ENCODE measurements at regions of chr5 and their contacts with region 1.

Region 1: GRCh38 chr5:170100066-170100943 is 5.4 kb upstream of the FOXI1 start:
- DNase-seq: peak; percentile 74 to 87 (median 81)
- ATAC-seq: peak; percentile 35 to 52
- H3K4me3 ChIP-seq: no peak overlapping the region
- H3K27ac ChIP-seq: no peak overlapping the region
- H3K4me1 ChIP-seq: peaks cover 2% of the 10 kb centered on the region
- H3K27me3 ChIP-seq: no peaks in the 10 kb centered on the region

Region 2: GRCh38 chr5:170183816-170184687 is 83.7 kb after region 1 on chr5:
- intact Hi-C with region 1: loop called (anchors 2 to 5 kb)
- DNase-seq: peak; percentile 59 to 83 (median 72)
- ATAC-seq: peak; percentile 78 to 80
- H3K4me3 ChIP-seq: no peak overlapping the region
- H3K27ac ChIP-seq: no peak overlapping the region
- H3K4me1 ChIP-seq: no peaks in the 10 kb centered on the region
- H3K27me3 ChIP-seq: no peaks in the 10 kb centered on the region

Region 3: DNA sequence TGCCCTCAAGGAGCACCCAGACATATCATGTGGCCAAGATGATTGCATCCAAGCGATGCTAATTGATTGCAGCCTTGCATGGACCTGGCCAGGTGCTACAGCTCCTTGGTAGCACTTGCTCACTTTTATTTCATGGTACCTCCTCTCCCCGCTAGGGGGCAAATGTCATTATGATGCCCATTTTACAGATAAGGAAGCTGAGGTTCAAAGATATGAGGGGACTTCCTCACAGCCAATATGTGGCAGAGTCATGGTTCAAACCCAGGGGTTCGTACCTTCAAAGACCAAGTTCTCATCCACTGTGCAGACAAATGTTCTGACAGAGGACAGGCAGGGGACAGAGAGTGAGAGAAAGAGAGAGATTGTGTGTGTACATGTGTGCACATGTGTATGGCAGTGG is 310.8 kb after region 1 on chr5:
- intact Hi-C with region 1: loop called in 1 of 4 experiments (anchors 10 kb)
- DNase-seq: no peak
- ATAC-seq: no peak
- H3K4me3 ChIP-seq: no peak overlapping the region
- H3K27ac ChIP-seq: no peak overlapping the region
- H3K4me1 ChIP-seq: no peaks in the 10 kb centered on the region
- H3K27me3 ChIP-seq: no peaks in the 10 kb centered on the region

Region 4: DNA sequence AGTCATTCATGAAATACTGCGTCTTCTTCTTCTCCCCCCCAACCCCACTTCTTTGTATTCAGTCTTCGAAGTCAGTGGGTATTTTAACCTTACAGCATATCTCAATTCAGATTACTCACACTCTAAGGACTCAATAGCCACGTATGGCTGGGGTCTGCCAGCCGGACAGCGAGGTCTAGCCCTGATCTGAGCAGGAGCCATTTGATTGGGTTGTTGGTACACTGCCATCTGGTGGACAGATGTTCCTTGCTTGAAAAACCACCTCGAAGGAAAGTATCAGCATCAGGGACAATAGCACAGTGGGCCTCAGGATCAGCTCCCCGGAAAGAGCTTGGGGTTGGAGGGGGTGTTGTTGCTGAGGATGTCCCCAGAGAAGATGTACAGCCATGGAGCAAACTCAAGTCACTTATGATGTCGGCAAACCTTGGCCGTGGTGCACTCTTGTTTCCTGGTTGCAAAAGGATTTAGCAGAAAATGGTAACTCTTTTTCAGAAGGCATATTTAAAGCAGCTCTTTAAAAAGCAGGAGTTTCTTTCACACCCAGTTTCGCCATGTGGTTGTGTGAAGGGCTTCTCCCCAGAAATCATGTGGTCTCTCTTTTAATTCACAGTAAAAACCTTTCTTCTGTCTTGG is 320.6 kb after region 1 on chr5:
- intact Hi-C with region 1: loop called in 3 of 4 experiments (anchors 10 kb)
- DNase-seq: peak in 2 of 3 donors; percentile 56 to 66
- ATAC-seq: peak; percentile 63 to 73
- H3K4me3 ChIP-seq: no peak overlapping the region
- H3K27ac ChIP-seq: no peak overlapping the region
- H3K4me1 ChIP-seq: no peaks in the 10 kb centered on the region
- H3K27me3 ChIP-seq: no peaks in the 10 kb centered on the region

Measured in right cardiac atrium (tissue), 5 donors.